Dendritic cell treated with granulocyte-macrophage colony-stimulating factor and Interleukin-4, amounts not matched to agents 40 ng/mL and 50 ng/mL, for 4 days (primary cell): ENCODE measurements at regions of chr17 and their contacts with region 1.

Region 1: GRCh38 chr17:50372758-50373556 is at the starts of genes EME1 and MRPL27:
- H3K4me3 Mint-ChIP-seq: peak within 1 kb of the TSS; percentile 96
- H3K27ac Mint-ChIP-seq: peak within 1 kb of the TSS; percentile 96
- H3K4me1 Mint-ChIP-seq: peaks cover 18% of the 10 kb centered on the region
- H3K27me3 Mint-ChIP-seq: no peaks in the 10 kb centered on the region

Region 2: GRCh38 chr17:50397111-50397918 is 24.4 kb after region 1 on chr17 and contains the start of gene LRRC59:
- intact Hi-C with region 1: loop called (anchors 1 kb)
- H3K4me3 Mint-ChIP-seq: peak within 1 kb of the TSS; percentile 78
- H3K27ac Mint-ChIP-seq: peak within 1 kb of the TSS; percentile 86
- H3K4me1 Mint-ChIP-seq: peaks cover 42% of the 10 kb centered on the region
- H3K27me3 Mint-ChIP-seq: peaks cover 1% of the 10 kb centered on the region

Region 3: GRCh38 chr17:50699410-50700074 is 326.6 kb after region 1 on chr17:
- intact Hi-C with region 1: loop called (anchors 5 kb)
- H3K4me3 Mint-ChIP-seq: no peak overlapping the region
- H3K27ac Mint-ChIP-seq: no peak overlapping the region
- H3K4me1 Mint-ChIP-seq: peaks cover 34% of the 10 kb centered on the region
- H3K27me3 Mint-ChIP-seq: no peaks in the 10 kb centered on the region